ENCODE measurements at regions of chr1 and their contacts with region 1.

Region 1: GRCh38 chr1:11037740-11038182 is 9.3 kb downstream of the MASP2 start:
- DNase-seq: peak; percentile 88
- CTCF ChIP-seq: peak; percentile 98

Region 2: GRCh38 chr1:10724948-10725847 is 312.6 kb before region 1 on chr1:
- CTCF ChIA-PET with region 1: no interaction called
- POLR2A ChIA-PET with region 1: no interaction called
- DNase-seq: no peak
- CTCF ChIP-seq: no peak

Region 3: DNA sequence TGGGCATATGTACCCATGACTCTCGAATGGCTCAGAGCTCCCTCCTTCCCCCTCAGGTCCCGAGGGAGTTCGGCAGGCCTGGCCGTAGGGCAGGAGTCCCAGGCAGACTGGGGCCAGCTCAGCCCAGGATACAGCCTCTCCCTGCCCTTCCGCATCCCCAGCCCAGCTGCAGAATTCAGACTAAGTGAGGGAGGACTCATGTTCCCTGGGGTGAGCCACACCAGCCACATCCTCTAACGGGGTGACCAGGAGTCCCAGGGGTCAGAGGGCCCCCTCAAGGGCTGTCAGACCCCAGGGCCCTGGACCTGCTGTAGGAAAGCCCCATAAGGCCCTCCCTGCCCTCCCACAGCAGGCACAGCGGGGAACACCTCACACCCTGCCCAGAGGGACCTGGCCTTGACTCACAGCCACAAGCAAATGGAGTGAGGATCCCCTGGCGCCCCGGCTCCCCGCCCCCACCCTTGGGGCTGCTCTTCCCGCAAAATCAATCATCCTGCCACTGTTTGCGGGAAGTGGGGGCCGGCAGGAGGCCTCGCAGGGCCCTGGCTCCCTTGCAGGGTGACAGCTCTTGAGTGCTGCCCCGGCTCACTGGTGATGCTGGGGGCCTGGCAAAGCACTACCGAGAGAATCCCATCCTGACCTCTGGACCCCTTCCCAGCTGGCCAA is 139.6 kb before region 1 on chr1:
- CTCF ChIA-PET with region 1: no interaction called
- POLR2A ChIA-PET with region 1: no interaction called
- DNase-seq: no peak
- CTCF ChIP-seq: no peak

Region 4: GRCh38 chr1:11012250-11013171 is 25.2 kb before region 1 on chr1 and contains the start of gene TARDBP:
- CTCF ChIA-PET with region 1: interaction called, 14 read pairs
- POLR2A ChIA-PET with region 1: no interaction called
- DNase-seq: peak; percentile 98
- CTCF ChIP-seq: no peak

Region 5: DNA sequence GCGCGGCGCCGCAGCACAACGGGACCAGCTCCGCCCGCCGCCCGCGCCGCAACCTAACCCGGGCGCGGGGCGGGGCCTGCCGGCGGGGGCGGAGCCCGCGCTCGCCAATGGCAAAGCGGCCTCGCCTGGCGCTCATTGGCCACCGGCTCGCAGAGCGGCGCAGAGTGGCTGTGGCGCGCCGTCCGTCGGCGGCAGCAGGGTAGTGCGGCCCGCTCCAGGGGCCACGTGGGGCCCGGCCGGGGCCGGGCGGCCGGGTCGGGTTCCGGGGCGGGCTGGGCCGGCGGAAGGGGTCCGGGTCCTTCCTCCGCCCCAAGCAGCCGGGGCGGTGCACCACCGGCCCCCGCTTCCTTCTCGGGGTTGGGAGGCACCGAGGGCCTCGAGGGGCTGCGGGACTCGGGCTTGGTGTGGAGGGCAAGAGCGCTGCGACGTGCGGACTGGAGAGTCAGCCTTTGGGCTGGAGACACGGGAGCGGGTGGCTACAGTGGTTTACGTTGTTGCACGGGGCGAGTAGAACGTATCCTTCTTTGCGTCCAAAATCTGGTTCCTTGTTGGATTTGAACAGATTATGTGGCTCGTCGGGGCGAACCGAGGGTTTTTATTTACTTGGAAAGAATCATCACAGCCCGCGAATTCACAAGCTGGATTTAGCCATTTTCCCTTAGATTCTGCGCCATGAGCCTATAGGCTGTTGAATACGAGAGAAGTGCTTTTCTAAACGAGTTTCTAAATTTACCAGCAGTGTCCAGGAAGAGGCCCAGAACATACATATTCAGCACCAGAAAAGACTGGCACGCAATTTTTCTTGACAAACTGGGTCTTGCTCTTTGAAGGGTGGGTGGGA is 22.4 kb after region 1 on chr1 and contains the start of gene SRM:
- CTCF ChIA-PET with region 1: interaction called, 63 read pairs
- POLR2A ChIA-PET with region 1: no interaction called
- DNase-seq: peak; percentile 98
- CTCF ChIP-seq: peak; percentile 14

Region 6: GRCh38 chr1:11099310-11100149 is 61.8 kb after region 1 on chr1 and contains the start of gene EXOSC10:
- CTCF ChIA-PET with region 1: interaction called, 20 read pairs
- POLR2A ChIA-PET with region 1: no interaction called
- DNase-seq: peak; percentile 99
- CTCF ChIP-seq: no peak

Region 7: GRCh38 chr1:11262171-11263049 is 224.6 kb after region 1 on chr1 and contains the start of gene MTOR:
- CTCF ChIA-PET with region 1: interaction called, 17 read pairs
- POLR2A ChIA-PET with region 1: no interaction called
- DNase-seq: peak; percentile 98
- CTCF ChIP-seq: no peak

Region 8: DNA sequence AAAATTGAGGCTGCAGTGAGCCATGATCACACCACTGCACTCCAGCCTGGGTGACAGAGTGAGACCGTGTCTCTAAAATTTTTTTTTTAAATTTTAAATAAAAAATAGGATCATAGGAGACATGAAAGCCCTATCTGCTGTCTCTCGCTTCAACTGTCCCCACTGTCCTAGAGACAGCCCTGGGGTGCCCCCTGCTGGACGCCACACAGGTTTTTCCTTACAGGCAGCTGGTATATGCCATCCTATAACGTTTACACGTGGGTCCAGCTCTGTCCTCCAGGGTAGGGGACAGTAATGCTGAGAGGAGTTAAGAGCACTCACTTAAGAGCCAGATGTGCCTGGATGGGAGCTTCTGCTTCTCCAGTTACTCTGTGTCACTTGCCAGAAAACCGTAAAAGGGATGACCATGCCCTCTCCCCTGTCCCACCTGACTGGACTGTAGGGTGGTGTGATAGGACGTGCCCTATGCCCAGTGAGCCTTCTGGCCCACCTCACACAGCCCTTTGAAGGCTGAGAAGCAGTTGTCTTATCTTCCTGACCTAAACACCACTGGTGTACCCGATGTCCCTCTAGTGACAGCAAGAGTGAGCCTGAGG is 608.0 kb after region 1 on chr1:
- CTCF ChIA-PET with region 1: interaction called, 248 read pairs
- POLR2A ChIA-PET with region 1: no interaction called
- DNase-seq: peak; percentile 75
- CTCF ChIP-seq: peak; percentile 77

Region 9: GRCh38 chr1:11735854-11736745 is 698.3 kb after region 1 on chr1 and contains the start of gene AGTRAP:
- CTCF ChIA-PET with region 1: interaction called, 10 read pairs
- POLR2A ChIA-PET with region 1: no interaction called
- DNase-seq: peak; percentile 94
- CTCF ChIP-seq: no peak

Measured in GM10248 (cell line).